Activated naive CD4-positive, alpha-beta T cell treated with anti-CD3 and anti-CD28 coated beads, Interleukin-2, amount 10 ng/mL, durations not matched to agents 7 days and 5 days (primary cell): ENCODE measurements at regions of chr12 and their contacts with region 1.

Region 1: GRCh38 chr12:110826592-110827200 is 20.1 kb upstream of the CCDC63 start:
- DNase-seq: peak; percentile 92
- H3K4me3 Mint-ChIP-seq: no peak overlapping the region
- H3K27ac Mint-ChIP-seq: no peak overlapping the region
- H3K4me1 Mint-ChIP-seq: peaks cover 6% of the 10 kb centered on the region
- H3K27me3 Mint-ChIP-seq: peaks cover 33% of the 10 kb centered on the region

Region 2: DNA sequence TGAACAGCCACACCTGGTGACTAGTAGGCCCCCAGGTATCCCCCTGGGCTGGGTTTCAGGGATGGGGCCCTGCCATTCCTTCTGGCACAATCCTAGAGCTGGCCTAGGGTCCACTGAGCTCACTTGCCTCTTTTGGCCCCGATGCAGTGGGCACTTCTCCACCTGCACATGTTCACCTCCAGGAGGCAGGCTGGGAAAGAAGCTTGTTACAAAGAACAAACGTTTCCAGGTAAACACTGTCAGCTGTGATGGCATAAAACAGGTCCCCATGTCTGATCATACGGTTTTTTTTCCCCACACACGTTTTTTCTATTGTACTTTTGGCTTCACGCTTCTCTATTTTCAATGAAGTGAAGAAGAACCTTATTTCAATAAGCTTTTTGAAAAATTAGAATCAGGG is 121.9 kb before region 1 on chr12:
- CTCF ChIA-PET with region 1: interaction called, 25 read pairs
- DNase-seq: peak; percentile 52
- H3K4me3 Mint-ChIP-seq: no peak overlapping the region
- H3K27ac Mint-ChIP-seq: no peak overlapping the region
- H3K4me1 Mint-ChIP-seq: no peaks in the 10 kb centered on the region
- H3K27me3 Mint-ChIP-seq: no peaks in the 10 kb centered on the region

Region 3: DNA sequence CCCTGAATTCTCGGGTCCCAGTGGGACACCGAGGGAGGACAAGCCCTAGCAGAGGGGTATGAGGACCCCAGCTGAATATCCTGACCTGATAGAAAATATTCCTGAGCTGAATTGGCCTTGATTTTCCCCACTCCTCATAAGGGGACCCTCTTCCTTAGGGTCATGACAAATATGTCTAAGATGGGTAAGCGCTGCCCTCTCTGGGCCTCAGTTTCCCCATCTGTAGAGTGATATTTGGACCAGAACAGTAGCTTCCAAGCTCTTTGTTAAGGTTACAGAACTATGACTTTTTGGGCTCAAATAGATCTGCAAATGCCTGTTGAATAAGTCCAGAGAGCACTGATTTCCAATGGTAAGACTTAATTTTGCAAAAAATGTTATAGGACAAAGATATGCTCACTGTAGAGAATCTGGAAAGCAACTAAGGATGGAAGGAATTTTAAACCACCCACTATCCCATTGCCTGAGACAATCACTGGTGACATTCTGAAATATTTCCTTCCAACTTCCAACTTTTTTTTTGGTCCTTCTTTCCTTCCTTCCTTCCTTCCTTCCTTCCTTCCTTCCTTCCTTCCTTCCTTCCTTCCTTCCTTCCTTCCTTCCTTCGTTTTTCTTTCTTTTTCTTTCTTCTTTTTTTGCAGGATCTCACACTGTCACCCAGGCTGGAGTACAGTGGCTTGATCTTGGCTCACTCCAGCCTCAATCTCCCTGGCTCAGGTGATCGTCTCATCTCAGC is 61.7 kb after region 1 on chr12:
- CTCF ChIA-PET with region 1: interaction called, 10 read pairs
- DNase-seq: no peak
- H3K4me3 Mint-ChIP-seq: peak overlapping the region; percentile 89
- H3K27ac Mint-ChIP-seq: no peak overlapping the region
- H3K4me1 Mint-ChIP-seq: peaks cover 7% of the 10 kb centered on the region
- H3K27me3 Mint-ChIP-seq: peaks cover 43% of the 10 kb centered on the region